Dorsolateral prefrontal cortex (tissue), 120 donors: ENCODE measurements at regions of chr11 and their contacts with region 1.

Region 1: DNA sequence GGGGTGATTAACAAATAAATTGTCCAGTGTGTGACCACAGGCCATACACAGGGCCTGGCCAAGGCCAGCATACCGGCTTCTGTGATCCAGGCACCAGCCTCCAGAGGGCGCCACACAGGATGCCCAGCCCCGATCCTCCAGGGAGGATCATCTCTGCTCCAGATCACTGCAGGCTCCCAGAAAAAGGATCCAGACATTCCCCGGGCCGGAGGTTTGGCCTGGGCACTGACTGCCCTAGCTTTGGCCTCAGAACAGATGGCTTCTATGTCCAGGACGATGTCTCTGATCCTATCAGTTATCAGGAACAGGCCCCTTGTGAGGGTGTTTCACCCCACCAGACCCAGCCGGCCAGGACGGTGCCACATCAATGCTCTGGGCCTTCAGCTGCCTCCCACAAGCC is 74.5 kb upstream of the LMO1 start:
- DNase-seq: peak in 7 of 10 donors; percentile 16 to 66 (median 50)
- H3K4me3 ChIP-seq: no peak overlapping the region
- H3K27ac ChIP-seq: no peak overlapping the region
- H3K27me3 ChIP-seq: peaks cover 0 to 5% (median 0%) of the 10 kb centered on the region in 45 donors
- CTCF ChIP-seq: peak in 55 of 56 donors; percentile 27 to 81 (median 64)

Region 2: DNA sequence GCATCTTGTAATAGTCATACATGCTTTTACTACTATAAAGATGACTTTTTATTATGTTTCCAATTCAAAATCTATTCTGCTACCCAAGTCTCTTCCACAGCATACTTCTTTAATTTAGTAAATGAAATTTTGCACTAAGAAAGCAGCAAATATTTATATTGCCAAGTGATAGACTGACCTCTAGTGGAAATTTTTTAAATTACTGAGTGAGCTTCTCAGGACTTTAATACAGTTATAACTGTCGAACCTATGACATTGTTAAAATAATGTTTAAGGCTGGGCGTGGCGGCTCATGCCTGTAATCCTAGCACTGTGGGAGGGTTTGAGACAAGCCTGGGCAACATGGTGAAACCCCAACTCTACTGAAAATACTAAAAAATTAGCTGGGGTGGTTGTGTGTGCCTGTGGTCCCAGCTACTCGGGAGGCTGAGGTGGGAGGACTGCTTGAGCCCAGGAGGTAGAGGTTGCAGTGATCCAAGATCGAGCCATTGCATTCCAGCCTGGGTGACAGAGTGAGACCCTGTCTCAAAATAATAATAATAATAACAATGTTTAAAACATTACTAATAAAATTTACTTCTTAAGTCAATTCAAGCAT is 228.6 kb after region 1 on chr11:
- intact Hi-C with region 1: loop called (anchors 5 to 10 kb)
- DNase-seq: no peak
- H3K4me3 ChIP-seq: no peak overlapping the region
- H3K27ac ChIP-seq: no peak overlapping the region
- H3K27me3 ChIP-seq: peaks cover 0 to 3% (median 0%) of the 10 kb centered on the region in 45 donors
- CTCF ChIP-seq: peak; percentile 60 to 95 (median 81)